ENCODE measurements at regions of chr16 and their contacts with region 1.

Region 1: DNA sequence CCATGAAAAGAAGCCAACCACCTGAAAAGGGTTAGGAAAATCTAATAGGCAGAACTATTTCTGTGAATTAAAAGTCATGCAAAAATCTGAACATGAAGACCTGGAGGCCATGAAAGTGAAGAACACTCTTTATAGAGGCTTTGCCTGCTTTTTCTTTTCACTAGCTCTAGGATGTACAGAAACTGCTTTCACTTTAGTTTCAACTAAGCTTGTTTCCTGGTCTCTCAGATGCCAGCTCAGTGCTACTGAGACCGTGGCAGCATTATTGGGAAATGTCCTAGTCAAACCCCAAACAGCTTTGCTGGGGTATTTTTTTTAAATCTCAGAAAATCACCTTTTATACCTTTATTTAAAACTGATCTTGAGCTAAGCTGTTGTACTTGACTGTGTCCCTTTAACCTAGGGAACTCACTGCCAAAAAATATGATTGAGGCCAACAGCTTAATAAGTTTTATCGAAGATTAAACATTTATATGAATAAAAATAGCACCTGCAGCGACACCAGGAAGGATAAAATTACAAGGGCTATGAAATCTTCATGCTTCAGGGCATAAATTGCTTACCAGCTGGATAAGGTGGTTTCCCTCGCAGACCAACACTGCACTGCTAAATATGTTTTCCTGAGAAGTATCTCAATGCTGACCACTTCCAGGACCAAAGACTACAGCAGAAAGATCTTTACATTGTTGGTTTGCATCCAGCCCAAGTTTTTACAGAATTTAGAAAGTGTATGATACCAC is 621.8 kb upstream of the ZFHX3 start:
- DNase-seq: no peak
- H3K4me3 ChIP-seq: no peak overlapping the region
- H3K27ac ChIP-seq: no peak overlapping the region
- H3K4me1 ChIP-seq: no peaks in the 10 kb centered on the region
- H3K27me3 ChIP-seq: peaks cover 0 to 3% of the 10 kb centered on the region in 2 donors
- CTCF ChIP-seq: no peak
- POLR2A ChIP-seq: no peak

Region 2: DNA sequence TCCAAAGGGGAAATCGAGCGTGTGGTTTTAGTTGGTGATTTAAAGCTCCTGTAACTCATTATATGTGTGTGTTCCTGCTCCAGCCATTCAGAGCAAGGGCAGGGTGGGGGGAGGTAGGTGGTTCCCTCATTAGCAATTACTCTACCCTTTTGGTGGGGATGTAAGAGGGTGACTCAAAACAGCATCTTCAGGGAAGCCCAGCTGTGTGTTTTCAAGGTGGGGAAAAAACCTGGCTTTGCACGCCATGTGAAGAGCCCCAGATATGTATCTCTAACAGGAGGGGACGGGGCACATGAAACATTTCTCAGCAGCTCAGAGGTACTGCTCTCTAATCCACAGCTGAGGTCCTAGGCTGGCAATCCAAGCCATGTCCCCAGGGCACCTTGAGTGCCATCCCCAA is 380.5 kb before region 1 on chr16:
- intact Hi-C with region 1: loop called (anchors 5 kb)
- DNase-seq: no peak
- H3K4me3 ChIP-seq: no peak overlapping the region
- H3K27ac ChIP-seq: no peak overlapping the region
- H3K4me1 ChIP-seq: no peaks in the 10 kb centered on the region
- H3K27me3 ChIP-seq: peaks cover 0 to 5% of the 10 kb centered on the region in 2 donors
- CTCF ChIP-seq: no peak
- POLR2A ChIP-seq: no peak

Measured in breast epithelium (tissue), 4 donors.